ENCODE measurements at regions of chr16 and their contacts with region 1.

Region 1: DNA sequence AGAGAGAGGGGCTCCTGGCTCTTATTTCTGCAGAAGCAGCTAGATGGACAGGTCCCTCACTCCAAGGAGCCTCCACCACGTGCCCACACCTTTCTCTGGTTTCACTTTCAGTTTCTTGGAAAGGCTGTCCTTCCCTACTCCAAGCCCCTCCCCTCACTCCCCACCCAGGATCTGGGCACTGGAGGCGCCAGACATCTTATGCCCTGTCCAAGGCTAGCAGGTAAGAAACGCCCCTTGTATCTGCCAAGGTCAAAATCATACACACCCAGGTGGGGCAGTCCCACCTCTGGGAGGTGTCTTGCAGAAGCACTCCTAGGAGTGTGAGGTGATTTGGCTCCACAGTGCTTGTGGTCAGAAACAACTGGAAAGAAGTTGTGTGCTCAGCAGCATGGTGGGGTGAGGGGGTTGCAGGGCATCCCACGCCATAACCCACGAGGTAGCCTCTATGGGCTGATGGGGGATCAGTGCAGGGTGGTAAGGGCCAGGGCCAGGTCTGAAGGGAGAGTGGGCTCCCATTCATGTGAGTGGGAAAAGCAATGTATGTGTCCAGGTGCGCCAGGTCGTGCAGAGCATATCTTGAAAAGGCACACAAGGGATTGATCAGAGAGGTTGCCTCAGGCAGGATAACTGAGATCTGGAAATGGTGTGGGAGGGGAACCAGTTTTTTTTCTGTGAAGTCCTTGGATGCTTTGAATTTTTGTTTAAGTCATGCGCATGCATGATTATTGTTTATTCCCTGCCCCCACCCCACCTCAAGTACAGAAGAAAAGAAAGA is 31.8 kb upstream of the PRM1 start:
- DNase-seq: peak; percentile 38
- H3K4me3 Mint-ChIP-seq: peak overlapping the region; percentile 27
- H3K27ac Mint-ChIP-seq: peak overlapping the region; percentile 57
- H3K4me1 Mint-ChIP-seq: peaks cover 61% of the 10 kb centered on the region
- H3K27me3 Mint-ChIP-seq: peaks cover 3% of the 10 kb centered on the region

Region 2: DNA sequence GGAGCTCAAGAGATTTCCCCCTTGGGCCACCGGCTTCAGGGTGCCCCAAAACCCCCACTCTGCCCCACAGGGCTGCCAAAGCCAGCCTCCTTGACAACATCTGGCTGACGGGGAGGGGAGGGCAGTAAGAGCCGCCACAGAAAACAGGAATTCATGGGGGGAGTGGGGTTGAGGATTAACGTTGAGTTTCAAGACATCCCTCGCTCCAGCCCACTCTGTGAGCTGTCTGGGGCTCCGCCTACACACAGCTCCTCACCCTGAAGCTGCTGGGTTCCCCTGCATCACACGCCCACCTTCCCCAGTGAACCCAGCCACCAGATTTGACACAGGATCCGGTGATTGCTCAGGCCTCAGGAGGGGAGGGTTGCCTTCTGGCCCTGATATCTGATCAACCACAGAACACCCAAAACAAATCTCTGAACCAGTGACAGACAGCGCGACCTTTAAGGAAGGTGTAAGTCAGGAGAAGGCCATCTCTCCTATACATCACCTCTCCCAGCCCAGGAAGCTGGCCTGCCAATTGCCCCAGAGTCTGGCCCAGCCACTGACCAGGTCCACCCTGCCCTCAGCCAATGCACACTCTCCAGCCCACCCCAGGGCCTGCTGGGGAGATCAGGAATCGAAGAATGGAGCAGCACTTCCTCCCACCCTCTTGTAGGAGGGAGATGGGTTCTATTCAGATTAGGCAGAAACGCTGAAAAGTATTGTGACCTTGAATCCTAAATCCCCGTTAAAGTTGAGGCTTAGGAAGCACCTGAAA is 236.5 kb before region 1 on chr16:
- intact Hi-C with region 1: loop called (anchors 5 kb)
- DNase-seq: peak; percentile 36
- H3K4me3 Mint-ChIP-seq: peak overlapping the region; percentile 48
- H3K27ac Mint-ChIP-seq: peak overlapping the region; percentile 90
- H3K4me1 Mint-ChIP-seq: peaks cover 94% of the 10 kb centered on the region
- H3K27me3 Mint-ChIP-seq: peaks cover 2% of the 10 kb centered on the region

Region 3: DNA sequence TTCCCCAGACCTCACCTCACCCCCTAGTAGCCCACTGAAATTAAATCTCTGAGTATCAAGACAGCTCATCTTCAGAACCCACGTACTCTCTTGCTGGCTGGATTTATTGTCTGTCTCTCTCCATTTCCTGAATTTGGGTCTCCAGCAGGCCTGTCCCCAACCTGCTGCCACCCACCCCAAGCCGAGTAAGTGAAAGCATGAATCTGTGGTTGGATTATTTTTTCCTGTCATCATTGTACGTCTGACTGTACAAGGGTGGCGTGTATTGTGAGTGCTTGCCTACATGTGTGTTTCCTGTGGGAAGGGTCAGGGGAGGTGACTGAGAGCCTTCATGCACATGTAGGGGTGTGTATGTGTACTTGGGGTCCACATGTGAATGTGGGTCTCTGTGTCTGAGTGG is 49.2 kb before region 1 on chr16:
- intact Hi-C with region 1: loop called (anchors 1 kb)
- DNase-seq: peak; percentile 41
- H3K4me3 Mint-ChIP-seq: no peak overlapping the region
- H3K27ac Mint-ChIP-seq: peak overlapping the region; percentile 82
- H3K4me1 Mint-ChIP-seq: peaks cover 41% of the 10 kb centered on the region
- H3K27me3 Mint-ChIP-seq: peaks cover 12% of the 10 kb centered on the region

Region 4: GRCh38 chr16:11285842-11286241 is 27.1 kb before region 1 on chr16:
- intact Hi-C with region 1: loop called (anchors 2 kb)
- DNase-seq: no peak
- H3K4me3 Mint-ChIP-seq: no peak overlapping the region
- H3K27ac Mint-ChIP-seq: no peak overlapping the region
- H3K4me1 Mint-ChIP-seq: no peaks in the 10 kb centered on the region
- H3K27me3 Mint-ChIP-seq: peaks cover 26% of the 10 kb centered on the region

Region 5: DNA sequence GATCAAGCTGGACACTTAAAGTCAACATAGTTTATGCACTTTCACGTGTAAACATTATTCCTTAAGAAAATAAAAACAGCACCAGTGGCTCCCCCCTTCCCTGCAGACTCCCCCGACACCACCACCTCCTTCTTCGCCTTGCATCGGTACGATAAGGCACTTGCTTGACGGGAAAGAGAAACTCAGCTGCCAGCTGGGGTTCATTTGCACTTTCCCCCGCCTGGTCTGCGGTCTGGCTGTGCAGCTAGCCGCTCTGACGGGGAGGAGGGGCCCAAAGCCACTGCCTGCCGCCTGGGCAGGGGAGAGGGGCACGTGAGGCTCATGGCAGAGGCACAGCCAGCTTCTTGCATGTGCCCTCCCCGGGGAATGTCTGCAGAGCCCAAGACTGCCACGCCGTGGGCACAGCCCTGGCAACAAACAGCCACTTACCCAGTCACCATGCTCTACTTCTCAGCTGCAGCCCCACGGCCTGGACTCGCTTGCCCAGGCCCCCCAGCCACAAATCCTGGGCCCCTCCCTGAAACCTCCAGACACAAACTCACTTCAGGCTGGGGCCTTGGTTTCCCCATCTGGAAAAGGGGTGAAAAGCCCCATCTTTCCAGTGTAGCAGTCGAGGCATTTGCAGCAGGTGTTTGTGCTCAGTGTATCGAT is 15.3 kb before region 1 on chr16:
- intact Hi-C with region 1: loop called (anchors 1 kb)
- DNase-seq: peak; percentile 70
- H3K4me3 Mint-ChIP-seq: peak overlapping the region; percentile 42
- H3K27ac Mint-ChIP-seq: no peak overlapping the region
- H3K4me1 Mint-ChIP-seq: peaks cover 34% of the 10 kb centered on the region
- H3K27me3 Mint-ChIP-seq: peaks cover 28% of the 10 kb centered on the region

Region 6: GRCh38 chr16:11328172-11329070 is 15.5 kb after region 1 on chr16:
- intact Hi-C with region 1: loop called (anchors 1 kb)
- DNase-seq: peak; percentile 55
- H3K4me3 Mint-ChIP-seq: peak overlapping the region; percentile 68
- H3K27ac Mint-ChIP-seq: peak overlapping the region; percentile 74
- H3K4me1 Mint-ChIP-seq: peaks cover 69% of the 10 kb centered on the region
- H3K27me3 Mint-ChIP-seq: peaks cover 5% of the 10 kb centered on the region

Region 7: GRCh38 chr16:11345040-11345862 is 32.3 kb after region 1 on chr16 and contains the start of gene RMI2:
- intact Hi-C with region 1: loop called (anchors 1 kb)
- DNase-seq: peak; percentile 97
- H3K4me3 Mint-ChIP-seq: peak within 1 kb of the TSS; percentile 93
- H3K27ac Mint-ChIP-seq: peak within 1 kb of the TSS; percentile 83
- H3K4me1 Mint-ChIP-seq: peaks cover 58% of the 10 kb centered on the region
- H3K27me3 Mint-ChIP-seq: peaks cover 4% of the 10 kb centered on the region
- total RNA-seq, gene RMI2: 49.8 and 55.7 TPM in 2 replicates